ENCODE measurements at regions of chr5 and their contacts with region 1.

Region 1: GRCh38 chr5:143403593-143404415 is at the start of gene NR3C1:
- DNase-seq: peak; percentile 95
- ATAC-seq: peak; percentile 88
- total RNA-seq, gene NR3C1: 56.1 TPM

Region 2: GRCh38 chr5:142713121-142713706 is 690.6 kb before region 1 on chr5:
- intact Hi-C with region 1: loop called (anchors 10 kb)
- DNase-seq: peak; percentile 93
- ATAC-seq: peak; percentile 84

Region 3: DNA sequence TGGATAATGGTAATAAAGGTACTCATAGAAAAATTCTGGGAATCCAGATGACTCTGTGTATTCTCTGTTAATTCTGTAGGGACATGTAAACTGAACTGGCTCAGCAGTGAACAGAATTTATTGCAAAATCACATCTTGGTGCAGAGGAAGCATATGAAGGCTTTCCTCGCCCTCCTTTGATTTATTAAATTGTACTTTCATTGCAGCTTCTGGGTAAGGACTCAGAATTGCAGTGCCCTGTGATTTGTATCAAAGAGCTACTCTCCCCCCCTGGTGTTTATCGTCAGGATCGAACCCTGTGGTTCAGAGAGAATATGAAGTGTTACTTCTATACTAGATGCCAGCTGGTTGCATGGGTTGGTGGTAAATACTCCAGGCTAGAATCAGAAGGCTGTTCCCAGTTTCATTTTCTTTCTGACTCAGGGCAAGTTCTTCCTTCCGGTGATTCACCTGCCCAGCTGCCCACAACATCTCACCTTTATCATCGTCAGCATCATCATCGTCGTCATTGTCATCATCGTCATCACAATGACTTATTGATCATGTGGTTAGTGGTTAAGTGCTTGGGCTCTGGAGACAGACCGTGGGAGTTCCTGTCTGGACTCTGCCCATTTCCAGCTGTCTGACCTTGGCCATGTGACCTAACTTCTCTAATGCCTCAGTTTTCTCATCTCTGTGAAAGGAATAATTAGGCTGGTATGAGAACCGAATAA is 394.8 kb before region 1 on chr5:
- intact Hi-C with region 1: loop called (anchors 5 kb)
- DNase-seq: no peak
- ATAC-seq: peak; percentile 20

Region 4: DNA sequence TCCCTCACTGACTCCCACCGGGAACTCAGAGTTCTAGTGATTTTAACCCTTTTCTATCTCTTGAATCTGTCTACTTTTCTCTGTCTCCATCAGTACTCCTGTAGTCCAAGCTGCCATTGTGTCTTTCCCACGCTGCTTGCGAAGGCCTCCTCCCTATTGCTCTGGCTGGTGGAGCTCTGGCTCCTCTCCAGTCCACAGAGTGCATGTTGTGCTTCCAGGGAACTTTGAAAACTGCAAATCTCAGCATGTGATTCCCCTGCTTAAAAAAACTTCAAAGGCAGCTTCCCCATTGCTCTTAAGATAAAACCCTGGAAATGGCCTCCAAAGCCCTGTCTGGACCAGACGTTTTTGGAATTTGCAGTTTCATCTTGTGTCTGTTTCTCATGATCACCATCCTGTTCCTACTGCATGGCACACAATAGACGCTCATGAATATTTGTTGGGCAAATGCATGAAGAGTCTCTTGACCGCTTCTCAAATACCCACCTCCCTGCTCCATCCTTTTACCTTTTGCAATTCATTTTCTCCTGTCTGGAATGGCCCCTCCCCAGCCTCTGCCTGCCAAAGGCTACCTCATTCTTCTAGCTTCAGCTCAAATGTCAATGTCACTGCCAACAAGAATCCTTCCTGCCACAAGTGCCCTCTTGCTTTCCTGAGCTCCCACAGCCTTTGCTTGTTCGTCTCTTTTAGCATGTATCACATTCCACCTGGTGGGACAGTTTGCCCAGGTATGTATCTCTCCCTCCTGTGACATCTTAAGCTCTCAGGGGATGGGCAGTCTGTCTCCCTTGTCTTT is 340.4 kb before region 1 on chr5:
- intact Hi-C with region 1: loop called (anchors 5 kb)
- DNase-seq: peak; percentile 91
- ATAC-seq: peak; percentile 86

Region 5: DNA sequence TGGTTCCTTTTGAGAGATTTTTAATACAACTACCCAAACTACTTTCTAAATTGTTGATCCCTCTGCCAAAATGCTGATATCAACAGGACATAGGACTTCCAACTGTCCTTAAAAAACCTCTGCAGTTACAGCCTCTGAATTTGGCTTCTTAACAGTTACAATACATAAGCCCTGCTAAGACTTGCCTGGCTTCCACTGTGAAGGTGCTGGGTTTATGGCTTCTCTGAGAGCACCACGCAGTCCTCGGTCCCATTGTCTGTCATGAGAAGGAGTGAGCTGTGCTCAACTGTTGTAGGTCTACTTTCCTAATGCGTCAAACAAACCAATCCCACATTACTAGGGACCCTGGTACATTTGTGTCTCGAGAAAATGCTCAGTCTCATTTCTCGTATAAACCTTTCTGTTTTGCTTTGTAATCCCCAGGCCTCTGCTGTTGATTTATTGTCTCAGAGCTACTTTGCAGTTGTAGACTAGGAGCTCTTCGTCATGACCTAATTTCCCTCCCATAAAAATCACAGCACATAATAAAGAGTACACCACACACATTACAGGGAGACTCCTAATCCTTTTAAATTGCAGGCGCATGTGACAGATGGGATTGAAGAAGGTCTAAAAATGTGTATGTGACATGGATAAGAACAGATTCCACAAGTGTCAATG is 275.3 kb before region 1 on chr5:
- intact Hi-C with region 1: loop called (anchors 5 kb)
- DNase-seq: no peak
- ATAC-seq: peak; percentile 28

Region 6: GRCh38 chr5:143314659-143315058 is 89.1 kb before region 1 on chr5:
- intact Hi-C with region 1: loop called (anchors 5 kb)
- DNase-seq: no peak
- ATAC-seq: no peak

Region 7: GRCh38 chr5:143685246-143685802 is 281.5 kb after region 1 on chr5:
- intact Hi-C with region 1: loop called (anchors 2 kb)
- DNase-seq: no peak
- ATAC-seq: no peak